ENCODE measurements at regions of chr15 and their contacts with region 1.

Region 1: GRCh38 chr15:43133430-43134156 is at the start of gene TMEM62:
- DNase-seq: peak; percentile 69
- H3K4me3 ChIP-seq: peak within 1 kb of the TSS; percentile 75 to 81
- H3K27ac ChIP-seq: peak within 1 kb of the TSS; percentile 73 to 76
- H3K4me1 ChIP-seq: peaks cover 3% of the 10 kb centered on the region
- H3K27me3 ChIP-seq: no peaks in the 10 kb centered on the region
- CTCF ChIP-seq: peak in 1 of 4 experiments; percentile 21
- POLR2A ChIP-seq: peak; percentile 84
- total RNA-seq, gene TMEM62: 34.4 to 35.4 TPM

Region 2: DNA sequence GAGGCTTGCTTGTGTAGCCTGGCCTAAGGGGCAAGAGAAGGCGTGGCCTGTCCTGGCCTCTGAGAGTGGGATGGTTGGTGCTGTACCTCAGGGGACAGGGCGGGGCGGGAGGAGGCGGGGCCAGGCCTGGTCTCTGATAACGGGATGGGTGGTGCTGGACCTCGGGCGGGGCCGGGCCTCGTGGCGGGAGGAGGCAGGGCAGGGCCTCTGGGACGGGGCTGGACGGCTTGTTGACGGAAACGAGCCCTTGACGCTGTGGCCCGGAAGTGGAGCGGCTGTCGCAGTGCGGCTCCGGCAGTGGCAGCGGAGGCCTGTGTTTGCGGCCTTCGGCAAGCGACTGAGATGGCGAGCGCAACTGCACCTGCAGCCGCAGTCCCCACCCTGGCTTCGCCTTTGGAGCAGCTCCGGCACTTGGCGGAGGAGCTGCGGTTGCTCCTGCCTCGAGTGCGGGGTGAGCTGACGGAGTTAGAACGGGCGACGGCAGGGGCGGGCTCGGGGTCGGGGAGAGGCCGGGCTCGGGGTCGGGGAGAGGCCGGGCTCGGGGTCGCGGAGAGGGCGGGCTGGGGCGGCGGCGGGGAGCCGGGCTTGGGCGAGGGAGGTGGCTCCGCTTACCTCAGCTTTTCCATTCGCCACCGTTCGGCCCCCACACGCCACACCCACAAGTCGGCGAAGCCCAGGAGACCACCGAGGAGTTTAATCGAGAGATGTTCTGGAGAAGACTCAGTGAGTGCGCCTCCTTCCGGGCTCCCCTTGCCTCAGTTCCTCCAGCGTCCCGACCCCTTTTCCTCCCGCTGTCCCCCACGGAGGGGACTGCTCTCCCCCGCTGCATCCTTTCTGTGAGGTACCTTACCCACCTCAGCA is 51.8 kb after region 1 on chr15 and contains the start of gene CCNDBP1:
- intact Hi-C with region 1: loop called (anchors 5 kb)
- DNase-seq: peak; percentile 92
- H3K4me3 ChIP-seq: peak within 1 kb of the TSS; percentile 71 to 91
- H3K27ac ChIP-seq: peak within 1 kb of the TSS; percentile 91 to 92
- H3K4me1 ChIP-seq: peaks cover 10% of the 10 kb centered on the region
- H3K27me3 ChIP-seq: no peaks in the 10 kb centered on the region
- CTCF ChIP-seq: peak; percentile 7 to 38 (median 24)
- POLR2A ChIP-seq: peak; percentile 81
- total RNA-seq, gene CCNDBP1: 63.6 to 91.9 TPM

Measured in prostate gland (tissue), 2 donors.